B cell (primary cell): ENCODE measurements at regions of chr22 and their contacts with region 1.

Region 1: DNA sequence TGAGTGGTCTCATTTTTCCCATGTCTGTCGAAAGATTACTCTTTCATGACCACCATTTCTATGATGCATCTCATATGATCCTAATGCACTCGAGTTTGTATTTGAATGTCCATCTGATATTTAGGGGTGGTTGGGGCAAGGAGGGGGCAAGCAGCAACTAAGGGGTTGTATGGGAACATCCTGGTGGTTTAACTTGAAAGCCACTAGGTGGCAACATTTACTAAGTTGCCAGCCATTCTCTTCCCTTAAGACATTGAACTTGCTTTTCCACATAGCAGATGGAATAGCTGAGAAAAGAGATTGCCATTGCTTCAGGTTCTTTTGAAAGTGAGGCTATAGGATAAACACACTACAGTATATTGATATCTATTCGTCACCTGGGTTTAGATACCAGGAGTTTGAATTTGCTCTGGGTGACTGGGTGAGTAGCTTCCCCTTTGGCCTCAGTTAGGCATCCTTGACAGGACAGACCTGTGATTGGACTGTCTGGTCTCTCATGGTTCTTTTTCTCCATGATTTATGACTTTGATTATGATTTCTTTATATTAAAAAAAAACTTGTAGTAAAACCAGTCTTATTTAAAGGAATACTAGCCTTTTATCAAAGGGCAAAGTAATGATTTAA is 32.4 kb downstream of the NF2 start:
- DNase-seq: peak; percentile 41
- ATAC-seq: no peak
- H3K4me3 ChIP-seq: no peak overlapping the region
- H3K4me3 Mint-ChIP-seq: no peak overlapping the region
- H3K27ac ChIP-seq: no peak overlapping the region
- H3K27ac Mint-ChIP-seq: no peak overlapping the region
- H3K4me1 ChIP-seq: peaks cover 0 to 3% of the 10 kb centered on the region in 2 donors
- H3K4me1 Mint-ChIP-seq: peaks cover 14% of the 10 kb centered on the region
- H3K27me3 ChIP-seq: no peaks in the 10 kb centered on the region
- H3K27me3 Mint-ChIP-seq: no peaks in the 10 kb centered on the region
- CTCF ChIP-seq: peak; percentile 67

Region 2: GRCh38 chr22:29569011-29569678 is 66.7 kb before region 1 on chr22:
- CTCF ChIA-PET with region 1: no interaction called
- POLR2A ChIA-PET with region 1: no interaction called
- intact Hi-C with region 1: no loop called
- DNase-seq: no peak
- ATAC-seq: no peak
- H3K4me3 ChIP-seq: no peak overlapping the region
- H3K4me3 Mint-ChIP-seq: no peak overlapping the region
- H3K27ac ChIP-seq: no peak overlapping the region
- H3K27ac Mint-ChIP-seq: no peak overlapping the region
- H3K4me1 ChIP-seq: no peaks in the 10 kb centered on the region
- H3K4me1 Mint-ChIP-seq: no peaks in the 10 kb centered on the region
- H3K27me3 ChIP-seq: no peaks in the 10 kb centered on the region
- H3K27me3 Mint-ChIP-seq: no peaks in the 10 kb centered on the region
- CTCF ChIP-seq: no peak

Region 3: DNA sequence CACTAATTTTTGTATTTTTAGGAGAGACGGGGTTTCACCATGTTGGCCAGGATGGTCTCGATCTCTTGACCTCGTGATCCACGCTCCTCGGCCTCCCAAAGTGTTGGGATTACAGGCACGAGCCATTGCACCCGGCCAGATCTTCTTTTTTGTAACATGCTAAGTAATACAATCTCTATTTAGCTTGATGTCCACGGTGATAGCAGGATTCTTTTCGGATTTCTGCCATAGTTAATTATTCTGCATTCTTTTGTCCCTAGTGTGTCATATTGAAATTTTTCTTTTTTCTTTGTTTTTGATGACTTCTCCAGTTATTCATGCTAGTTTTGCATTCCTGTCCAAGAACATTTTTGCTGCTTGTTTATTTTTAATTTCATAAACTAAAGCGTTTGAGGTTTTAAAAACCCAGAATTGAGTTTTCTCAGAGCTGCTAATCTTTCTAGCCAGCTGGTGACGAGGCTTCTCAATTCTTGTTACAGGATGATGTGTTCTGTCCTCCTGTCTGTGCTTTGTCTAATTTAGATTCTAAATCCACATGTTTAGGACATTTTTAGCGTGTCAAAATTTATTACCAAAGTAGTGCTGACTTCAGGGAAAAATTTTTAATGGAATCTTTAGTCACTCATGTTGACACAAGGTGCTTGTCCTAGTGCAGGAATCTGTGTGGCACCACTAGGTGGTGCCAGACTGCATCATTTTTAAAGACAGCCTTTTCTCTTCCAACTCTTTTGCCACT is 10.6 kb before region 1 on chr22:
- CTCF ChIA-PET with region 1: interaction called, 17 read pairs
- POLR2A ChIA-PET with region 1: no interaction called
- intact Hi-C with region 1: no loop called
- DNase-seq: peak; percentile 59
- ATAC-seq: peak; percentile 28
- H3K4me3 ChIP-seq: no peak overlapping the region
- H3K4me3 Mint-ChIP-seq: no peak overlapping the region
- H3K27ac ChIP-seq: no peak overlapping the region
- H3K27ac Mint-ChIP-seq: no peak overlapping the region
- H3K4me1 ChIP-seq: peaks cover 26 to 27% of the 10 kb centered on the region in 2 donors
- H3K4me1 Mint-ChIP-seq: peaks cover 48% of the 10 kb centered on the region
- H3K27me3 ChIP-seq: no peaks in the 10 kb centered on the region
- H3K27me3 Mint-ChIP-seq: no peaks in the 10 kb centered on the region
- CTCF ChIP-seq: peak; percentile 98

Region 4: GRCh38 chr22:29663180-29663821 is 27.5 kb after region 1 on chr22:
- CTCF ChIA-PET with region 1: no interaction called
- POLR2A ChIA-PET with region 1: no interaction called
- intact Hi-C with region 1: no loop called
- DNase-seq: no peak
- ATAC-seq: no peak
- H3K4me3 ChIP-seq: no peak overlapping the region
- H3K4me3 Mint-ChIP-seq: no peak overlapping the region
- H3K27ac ChIP-seq: no peak overlapping the region
- H3K27ac Mint-ChIP-seq: no peak overlapping the region
- H3K4me1 ChIP-seq: peaks cover 0 to under 1% of the 10 kb centered on the region in 2 donors
- H3K4me1 Mint-ChIP-seq: peaks cover 3% of the 10 kb centered on the region
- H3K27me3 ChIP-seq: no peaks in the 10 kb centered on the region
- H3K27me3 Mint-ChIP-seq: no peaks in the 10 kb centered on the region
- CTCF ChIP-seq: no peak

Region 5: GRCh38 chr22:30089655-30089974 is 453.8 kb after region 1 on chr22:
- CTCF ChIA-PET with region 1: interaction called, 7 read pairs
- POLR2A ChIA-PET with region 1: no interaction called
- intact Hi-C with region 1: loop called (anchors 5 kb)
- DNase-seq: no peak
- ATAC-seq: no peak
- H3K4me3 ChIP-seq: no peak overlapping the region
- H3K4me3 Mint-ChIP-seq: no peak overlapping the region
- H3K27ac ChIP-seq: no peak overlapping the region
- H3K27ac Mint-ChIP-seq: no peak overlapping the region
- H3K4me1 ChIP-seq: no peaks in the 10 kb centered on the region
- H3K4me1 Mint-ChIP-seq: no peaks in the 10 kb centered on the region
- H3K27me3 ChIP-seq: peaks cover 0 to 3% (median 0%) of the 10 kb centered on the region in 4 experiments
- H3K27me3 Mint-ChIP-seq: peaks cover 26% of the 10 kb centered on the region
- CTCF ChIP-seq: no peak